K562 (cell line): ENCODE measurements at regions of chr11 and their contacts with region 1.

Region 1: DNA sequence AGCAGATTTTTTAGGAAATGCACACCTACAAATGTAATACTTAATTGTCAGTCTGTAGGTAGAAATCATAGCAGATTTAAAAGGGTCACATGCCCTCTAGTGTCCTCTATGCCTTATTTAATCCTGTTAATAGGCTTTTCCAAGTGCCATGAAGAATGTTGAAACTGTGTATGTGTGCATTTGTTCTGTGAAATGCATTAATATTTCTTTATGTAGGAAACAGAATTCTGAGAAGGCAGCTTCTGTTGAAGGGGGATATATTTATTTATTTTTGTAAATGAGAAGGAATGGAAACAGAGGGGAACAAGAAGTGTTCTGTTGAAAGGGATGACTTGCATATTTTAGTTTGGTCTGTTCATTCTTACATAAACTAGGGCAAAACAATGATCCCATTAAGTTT is 51.0 kb downstream of the SVIP start:
- DNase-seq: no peak
- ATAC-seq: peak; percentile 76
- H3K4me3 ChIP-seq: no peak overlapping the region
- H3K27ac ChIP-seq: no peak overlapping the region
- H3K4me1 ChIP-seq: no peaks in the 10 kb centered on the region
- H3K27me3 ChIP-seq: no peaks in the 10 kb centered on the region
- CTCF ChIP-seq: peak in 1 of 3 experiments; percentile 30; a peak in 2 of 6 replicates
- EP300 ChIP-seq: no peak
- POLR2A ChIP-seq: no peak
- RAD21 ChIP-seq: peak; percentile 30 to 75; a peak in 2 of 4 replicates

Region 2: DNA sequence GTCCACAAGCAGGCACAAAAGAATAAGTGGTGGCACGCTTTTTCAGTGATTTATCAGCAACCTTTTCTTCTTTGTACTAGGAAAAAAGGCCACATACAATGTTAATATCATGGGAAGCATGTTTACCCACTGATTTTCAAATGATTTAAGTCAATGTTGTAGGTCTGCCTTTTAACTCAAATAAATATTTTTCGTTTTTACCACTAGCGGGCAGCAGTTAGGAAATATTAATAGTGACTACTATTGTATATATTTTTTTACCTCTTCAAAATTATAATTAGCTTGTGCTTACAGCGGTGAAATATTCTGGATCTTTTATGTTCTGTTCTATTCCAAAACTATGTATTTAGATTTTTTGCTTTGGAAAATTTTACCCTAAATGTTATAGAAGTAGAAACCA is 446.9 kb before region 1 on chr11:
- CTCF ChIA-PET with region 1: interaction called, 3 read pairs
- POLR2A ChIA-PET with region 1: no interaction called
- in situ Hi-C with region 1: loop called (anchors 10 kb)
- intact Hi-C with region 1: loop called (anchors 2 kb)
- DNase-seq: no peak
- ATAC-seq: no peak
- H3K4me3 ChIP-seq: no peak overlapping the region
- H3K27ac ChIP-seq: no peak overlapping the region
- H3K4me1 ChIP-seq: no peaks in the 10 kb centered on the region
- H3K27me3 ChIP-seq: no peaks in the 10 kb centered on the region
- CTCF ChIP-seq: peak in 1 of 3 experiments; percentile 5; a peak in 1 of 6 replicates
- EP300 ChIP-seq: no peak
- POLR2A ChIP-seq: no peak
- RAD21 ChIP-seq: no peak

Region 3: GRCh38 chr11:22337596-22338485 is 440.8 kb before region 1 on chr11 and contains the start of gene SLC17A6:
- CTCF ChIA-PET with region 1: interaction called, 3 read pairs
- POLR2A ChIA-PET with region 1: no interaction called
- in situ Hi-C with region 1: loop called (anchors 10 kb)
- intact Hi-C with region 1: loop called (anchors 2 kb)
- DNase-seq: peak in 2 of 4 experiments; percentile 10 to 44
- ATAC-seq: peak; percentile 41; the same call in 2 of the 3 replicates
- H3K4me3 ChIP-seq: no peak within 1 kb of the TSS
- H3K27ac ChIP-seq: no peak within 1 kb of the TSS
- H3K4me1 ChIP-seq: 0 out of 5 replicates have a peak, but pooled peaks cover 0 to 5% of the 10 kb centered on the region in 2 experiments
- H3K27me3 ChIP-seq: peaks cover 0 to 23% of the 10 kb centered on the region in 2 experiments; a peak in 2 of 5 replicates
- CTCF ChIP-seq: no peak
- EP300 ChIP-seq: no peak
- POLR2A ChIP-seq: no peak
- RAD21 ChIP-seq: no peak
- polyA plus RNA-seq, gene SLC17A6: not detected

Region 4: GRCh38 chr11:22670830-22671229 is 107.8 kb before region 1 on chr11:
- CTCF ChIA-PET with region 1: interaction called, 7 read pairs
- POLR2A ChIA-PET with region 1: no interaction called
- in situ Hi-C with region 1: no loop called
- intact Hi-C with region 1: loop called (anchors 2 kb)
- DNase-seq: peak in 1 of 4 experiments; percentile 23
- ATAC-seq: peak; percentile 82
- H3K4me3 ChIP-seq: no peak overlapping the region
- H3K27ac ChIP-seq: no peak overlapping the region
- H3K4me1 ChIP-seq: peaks cover 0 to 5% of the 10 kb centered on the region in 2 experiments; a peak in 2 of 5 replicates
- H3K27me3 ChIP-seq: peaks cover 0 to 8% of the 10 kb centered on the region in 2 experiments; a peak in 2 of 5 replicates
- CTCF ChIP-seq: peak; percentile 16 to 39 (median 23); a peak in 3 of 6 replicates
- EP300 ChIP-seq: no peak
- POLR2A ChIP-seq: no peak
- RAD21 ChIP-seq: peak; percentile 34 to 76; a peak in 3 of 4 replicates

Region 5: DNA sequence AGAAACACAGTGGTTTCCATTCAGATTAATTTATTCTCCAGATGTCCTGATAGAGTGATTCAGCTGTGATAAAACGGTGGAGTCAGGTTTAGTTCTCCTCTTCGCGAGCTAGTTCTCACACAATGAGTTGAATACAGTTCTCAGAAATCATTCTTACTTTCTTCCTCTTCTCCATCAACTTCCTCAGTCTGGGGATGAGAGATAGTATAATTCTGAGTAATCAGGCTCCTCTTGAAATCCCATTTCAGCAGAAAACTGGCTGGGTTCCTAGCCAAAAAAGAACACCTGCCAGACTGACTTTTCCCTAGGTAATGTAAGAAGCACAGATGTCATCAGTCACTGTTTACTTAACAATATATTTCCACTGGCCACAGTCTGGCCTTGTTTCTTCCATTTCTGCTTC is 25.7 kb before region 1 on chr11:
- CTCF ChIA-PET with region 1: no interaction called
- POLR2A ChIA-PET with region 1: no interaction called
- in situ Hi-C with region 1: no loop called
- intact Hi-C with region 1: no loop called
- DNase-seq: peak in 2 of 4 experiments; percentile 27 to 74
- ATAC-seq: peak; percentile 71
- H3K4me3 ChIP-seq: no peak overlapping the region
- H3K27ac ChIP-seq: peak overlapping the region; percentile 57; the same call in 1 of the 3 replicates
- H3K4me1 ChIP-seq: no peaks in the 10 kb centered on the region; a peak in 2 of 5 replicates
- H3K27me3 ChIP-seq: no peaks in the 10 kb centered on the region
- CTCF ChIP-seq: no peak
- EP300 ChIP-seq: peak; percentile 85
- POLR2A ChIP-seq: no peak
- RAD21 ChIP-seq: no peak

Region 6: DNA sequence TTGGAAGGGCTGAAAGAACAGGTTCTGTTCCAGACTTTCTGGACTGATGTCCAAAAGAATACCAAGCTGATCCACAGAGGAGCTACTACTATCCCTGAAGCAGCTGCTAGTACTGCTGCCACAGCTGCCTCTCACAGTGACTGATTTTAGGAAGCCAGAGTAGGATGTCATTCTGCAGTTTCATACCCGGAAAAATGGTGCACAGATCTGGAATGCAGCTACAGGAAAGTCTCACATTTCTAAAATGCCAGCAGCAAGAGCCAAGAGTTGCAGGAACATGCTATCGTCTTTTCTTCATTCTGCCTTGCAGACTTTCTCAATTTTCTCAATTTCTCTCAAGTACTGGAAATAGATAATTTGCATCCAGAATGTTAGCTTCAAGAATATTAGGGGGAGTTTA is 101.0 kb after region 1 on chr11:
- CTCF ChIA-PET with region 1: no interaction called
- POLR2A ChIA-PET with region 1: no interaction called
- in situ Hi-C with region 1: no loop called
- intact Hi-C with region 1: no loop called
- DNase-seq: no peak
- ATAC-seq: no peak
- H3K4me3 ChIP-seq: no peak overlapping the region
- H3K27ac ChIP-seq: no peak overlapping the region
- H3K4me1 ChIP-seq: no peaks in the 10 kb centered on the region
- H3K27me3 ChIP-seq: no peaks in the 10 kb centered on the region
- CTCF ChIP-seq: no peak
- EP300 ChIP-seq: no peak
- POLR2A ChIP-seq: no peak
- RAD21 ChIP-seq: no peak